A673 (cell line): ENCODE measurements at regions of chr15 and their contacts with region 1.

Region 1: GRCh38 chr15:40684381-40684780 is 10.6 kb upstream of the RAD51 start:
- DNase-seq: no peak
- H3K4me3 ChIP-seq: no peak overlapping the region
- H3K27ac ChIP-seq: no peak overlapping the region
- H3K4me1 ChIP-seq: no peaks in the 10 kb centered on the region
- H3K27me3 ChIP-seq: no peaks in the 10 kb centered on the region
- CTCF ChIP-seq: no peak

Region 2: DNA sequence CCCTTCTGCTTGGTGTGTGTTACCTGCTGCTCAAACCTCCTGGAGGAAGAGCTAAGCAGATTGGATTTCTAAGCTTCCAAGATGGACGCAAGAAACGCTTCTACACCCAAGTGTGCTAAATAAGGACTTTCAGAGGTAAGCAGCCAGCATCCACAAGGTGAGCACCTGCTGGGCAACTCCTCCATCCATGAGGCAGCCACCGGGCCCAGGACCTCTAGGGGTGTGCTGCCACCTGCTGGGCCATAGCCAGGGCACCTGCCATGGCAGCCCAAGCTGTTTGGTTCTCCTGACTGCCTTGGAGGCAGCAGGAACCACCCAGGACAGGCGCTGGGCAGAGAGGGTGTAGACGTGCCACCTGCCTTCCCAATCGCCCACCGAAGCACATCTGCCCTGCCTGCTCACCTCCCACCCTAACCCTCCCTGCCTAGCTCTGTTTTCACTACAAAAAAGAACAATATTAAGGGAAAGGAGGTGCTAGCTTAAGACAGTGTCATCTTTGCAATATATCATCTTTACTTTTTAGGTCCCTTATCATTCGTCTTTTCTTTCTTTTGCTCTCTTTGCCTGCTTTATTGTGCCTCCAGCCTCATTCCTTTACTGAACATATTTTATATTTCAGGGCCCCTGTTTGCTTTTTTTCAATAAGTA is 98.3 kb after region 1 on chr15:
- CTCF ChIA-PET with region 1: interaction called, 4 read pairs
- POLR2A ChIA-PET with region 1: no interaction called
- intact Hi-C with region 1: loop called (anchors 2 kb)
- DNase-seq: peak; percentile 56
- H3K4me3 ChIP-seq: no peak overlapping the region
- H3K27ac ChIP-seq: no peak overlapping the region
- H3K4me1 ChIP-seq: peaks cover 9% of the 10 kb centered on the region
- H3K27me3 ChIP-seq: no peaks in the 10 kb centered on the region
- CTCF ChIP-seq: peak; percentile 68